ENCODE measurements at regions of chr7 and their contacts with region 1.

Region 1: GRCh38 chr7:17063045-17063383 is 181.2 kb upstream of the AGR3 start:
- DNase-seq: no peak
- H3K4me3 ChIP-seq: no peak overlapping the region
- CTCF ChIP-seq: no peak

Region 2: DNA sequence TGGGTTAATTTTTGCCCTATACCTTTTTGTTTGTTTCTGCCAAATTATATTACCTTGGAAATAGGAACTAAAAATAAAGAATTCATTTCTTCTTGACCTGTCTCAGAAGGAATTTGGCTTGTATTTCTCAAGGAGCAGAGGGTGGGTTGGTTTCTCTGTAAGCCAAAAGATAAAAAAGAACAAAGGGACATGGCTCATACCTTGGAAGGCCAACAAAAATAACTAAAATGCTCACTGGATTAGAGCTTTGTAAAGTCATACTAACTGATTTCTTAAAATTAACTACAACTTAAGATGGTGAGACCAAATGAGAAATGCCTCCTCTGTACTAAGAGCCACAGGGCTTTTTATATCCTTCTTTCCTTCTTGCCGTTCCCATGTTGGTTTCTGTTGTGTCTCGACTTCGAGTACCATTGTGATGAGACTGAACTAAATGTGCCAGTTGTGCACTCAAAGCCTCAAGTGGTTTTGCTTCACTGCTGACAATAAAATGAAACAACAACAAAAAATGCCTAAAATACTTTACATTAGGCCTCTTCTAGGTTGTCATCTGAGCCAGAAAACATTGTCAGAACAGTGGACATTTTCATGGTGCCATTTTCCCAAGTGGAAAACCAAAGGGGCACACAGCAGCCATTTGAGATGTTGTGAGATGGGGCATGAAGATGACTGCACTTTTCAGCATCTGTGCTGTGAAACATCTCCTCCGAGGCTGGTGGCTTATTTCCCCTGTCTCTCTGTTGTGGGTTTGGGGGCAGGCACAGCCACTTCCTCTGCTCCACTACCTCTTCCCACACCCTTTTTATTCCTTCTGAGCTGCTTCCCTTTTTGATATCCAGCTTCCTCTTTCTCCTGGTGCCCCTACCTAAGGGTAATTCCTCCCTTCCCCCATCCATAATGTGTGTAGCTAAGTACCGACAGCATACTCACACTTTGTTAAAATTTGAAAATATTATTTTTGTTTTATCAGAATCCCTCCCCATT is 129.4 kb before region 1 on chr7:
- CTCF ChIA-PET with region 1: no interaction called
- POLR2A ChIA-PET with region 1: no interaction called
- DNase-seq: no peak
- H3K4me3 ChIP-seq: no peak overlapping the region
- CTCF ChIP-seq: no peak

Region 3: GRCh38 chr7:17044858-17045257 is 18.2 kb before region 1 on chr7:
- CTCF ChIA-PET with region 1: interaction called, 27 read pairs
- POLR2A ChIA-PET with region 1: no interaction called
- DNase-seq: no peak
- H3K4me3 ChIP-seq: no peak overlapping the region
- CTCF ChIP-seq: no peak

Region 4: GRCh38 chr7:17105701-17106100 is 42.7 kb after region 1 on chr7:
- CTCF ChIA-PET with region 1: interaction called, 12 read pairs
- POLR2A ChIA-PET with region 1: no interaction called
- DNase-seq: no peak
- H3K4me3 ChIP-seq: no peak overlapping the region
- CTCF ChIP-seq: no peak

Region 5: DNA sequence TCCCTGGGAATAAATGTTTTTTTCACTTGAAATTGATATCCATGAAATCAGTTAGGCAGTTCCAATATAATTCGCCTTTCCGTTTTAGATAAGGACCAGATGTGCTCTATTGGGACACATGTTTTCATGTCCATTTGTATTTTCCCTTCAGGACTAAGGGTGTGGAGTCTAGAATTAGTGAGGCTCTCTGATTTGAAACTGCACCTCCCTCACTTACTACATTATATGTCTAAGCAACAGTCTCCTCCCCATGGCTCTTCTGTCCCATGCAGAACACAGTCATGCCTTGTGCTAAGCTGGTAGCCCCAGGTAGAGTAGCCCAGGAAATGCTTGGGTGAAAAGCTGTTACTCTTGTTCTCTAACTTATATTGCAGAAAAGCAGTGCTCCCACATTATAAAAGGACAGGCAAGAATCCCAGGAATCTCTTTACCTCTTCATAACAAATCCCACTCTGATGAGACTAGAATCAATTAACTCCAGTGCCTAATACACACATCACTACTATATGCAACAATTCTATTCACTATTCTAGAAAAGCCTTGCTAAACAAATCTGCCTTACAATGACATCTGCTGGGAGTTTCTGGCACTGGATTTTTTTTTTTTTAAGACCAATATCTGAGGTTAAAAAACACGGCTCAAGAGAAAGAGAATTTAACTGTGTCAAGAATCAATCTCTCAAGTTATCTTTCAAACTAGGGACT is 583.4 kb after region 1 on chr7:
- CTCF ChIA-PET with region 1: interaction called, 10 read pairs
- POLR2A ChIA-PET with region 1: no interaction called
- DNase-seq: no peak
- H3K4me3 ChIP-seq: no peak overlapping the region
- CTCF ChIP-seq: peak; percentile 18

Measured in AG04449 (cell line).